Vagina (tissue), 2 donors: ENCODE measurements at regions of chr22 and their contacts with region 1.

Region 1: GRCh38 chr22:39055658-39056057 is 15.0 kb downstream of the APOBEC3F start:
- DNase-seq: no peak
- H3K4me3 ChIP-seq: no peak overlapping the region
- H3K27ac ChIP-seq: no peak overlapping the region
- H3K4me1 ChIP-seq: no peaks in the 10 kb centered on the region
- H3K27me3 ChIP-seq: no peaks in the 10 kb centered on the region
- CTCF ChIP-seq: no peak
- POLR2A ChIP-seq: no peak

Region 2: GRCh38 chr22:38953577-38954413 is 101.9 kb before region 1 on chr22:
- intact Hi-C with region 1: loop called (anchors 5 kb)
- DNase-seq: peak in 1 of 2 donors; percentile 92
- H3K4me3 ChIP-seq: no peak overlapping the region
- H3K27ac ChIP-seq: no peak overlapping the region
- H3K4me1 ChIP-seq: no peaks in the 10 kb centered on the region
- H3K27me3 ChIP-seq: no peaks in the 10 kb centered on the region
- CTCF ChIP-seq: no peak
- POLR2A ChIP-seq: no peak